ENCODE measurements at regions of chr20 and their contacts with region 1.

Region 1: GRCh38 chr20:57596998-57597939 is 23.0 kb downstream of the ZBP1 start:
- DNase-seq: peak in 1 of 2 donors; percentile 85
- ATAC-seq: peak; percentile 52

Region 2: GRCh38 chr20:57374931-57375651 is 222.2 kb before region 1 on chr20:
- intact Hi-C with region 1: loop called in 1 of 2 experiments (anchors 10 kb)
- DNase-seq: peak in 1 of 2 donors; percentile 15
- ATAC-seq: peak; percentile 56

Region 3: DNA sequence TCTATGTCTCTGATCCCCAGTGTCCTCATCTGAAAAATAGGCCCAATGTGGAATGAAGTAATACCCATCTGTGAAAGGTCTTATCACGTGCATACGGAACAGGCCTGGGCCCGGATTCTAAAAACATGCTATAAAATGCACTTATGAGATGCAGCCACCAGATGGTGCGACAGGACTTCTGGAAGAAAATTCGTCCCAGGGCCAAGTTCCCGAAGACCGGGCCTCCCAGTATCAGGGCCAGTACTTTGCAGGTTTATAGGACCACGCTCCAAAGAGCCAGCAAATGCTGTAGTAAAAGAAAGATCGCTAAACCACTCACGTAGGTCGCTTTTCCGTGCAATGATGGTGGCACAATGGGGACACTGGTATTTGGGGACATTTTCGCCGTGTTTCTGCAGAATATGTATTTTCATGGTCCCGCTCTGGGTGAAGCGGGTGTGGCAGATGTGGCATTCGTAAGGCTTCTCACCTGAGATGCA is 83.0 kb before region 1 on chr20:
- intact Hi-C with region 1: loop called (anchors 5 kb)
- DNase-seq: peak in 1 of 2 donors; percentile 77
- ATAC-seq: peak; percentile 79

Region 4: GRCh38 chr20:58209652-58210397 is 612.6 kb after region 1 on chr20:
- intact Hi-C with region 1: loop called (anchors 5 kb)
- DNase-seq: peak; percentile 63 to 91
- ATAC-seq: peak; percentile 94